ENCODE measurements at regions of chr5 and their contacts with region 1.

Region 1: GRCh38 chr5:82560561-82560960 is 282.4 kb upstream of the RPS23 start:
- DNase-seq: no peak

Region 2: DNA sequence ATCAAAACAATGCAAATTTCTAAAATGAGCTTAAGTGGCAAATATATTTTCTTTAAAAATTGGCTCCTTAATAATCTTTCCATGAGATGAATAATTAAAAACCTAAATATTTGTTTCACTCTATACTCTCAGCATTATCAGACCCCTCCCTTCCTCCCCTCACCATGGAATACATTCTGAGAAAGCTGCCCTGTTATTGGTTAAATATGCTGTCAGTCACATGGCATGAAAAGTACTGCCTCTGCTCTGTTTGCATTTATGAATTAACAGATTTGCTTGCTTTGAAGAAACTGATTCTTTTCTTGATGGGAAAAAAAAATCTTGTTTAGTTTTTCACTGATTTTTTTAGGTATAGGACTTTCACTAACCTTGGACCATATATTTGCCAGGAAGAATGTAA is 265.4 kb before region 1 on chr5:
- intact Hi-C with region 1: loop called in 1 of 2 experiments (anchors 5 kb)
- DNase-seq: no peak

Region 3: GRCh38 chr5:83035373-83036101 is 475.0 kb after region 1 on chr5:
- intact Hi-C with region 1: no loop called
- DNase-seq: no peak